ENCODE measurements at regions of chr17 and their contacts with region 1.

Region 1: DNA sequence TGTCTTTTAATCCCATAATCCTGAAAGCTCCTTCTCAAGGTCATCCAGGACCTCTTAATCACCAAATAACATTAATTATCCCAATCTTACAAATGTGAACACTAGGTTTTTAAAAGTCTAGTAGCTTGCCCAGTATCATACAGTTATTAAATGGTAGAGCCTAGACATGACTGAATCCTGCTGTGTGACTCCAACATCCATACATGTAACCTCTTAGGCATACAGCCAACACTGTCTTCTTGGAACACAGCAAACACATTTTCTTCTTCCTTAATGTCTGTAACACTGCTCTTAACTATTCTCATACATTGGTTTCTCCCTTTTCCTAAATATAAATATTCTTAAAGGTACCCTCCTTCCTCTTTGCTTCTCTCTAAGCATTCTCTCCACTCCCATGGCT is 13.7 kb downstream of the BRIP1 start:
- DNase-seq: peak; percentile 58
- ATAC-seq: no peak
- H3K4me3 ChIP-seq: no peak overlapping the region
- H3K27ac ChIP-seq: no peak overlapping the region
- H3K4me1 ChIP-seq: no peaks in the 10 kb centered on the region
- H3K27me3 ChIP-seq: no peaks in the 10 kb centered on the region
- CTCF ChIP-seq: no peak
- POLR2A ChIP-seq: no peak
- RAD21 ChIP-seq: no peak

Region 2: GRCh38 chr17:61426013-61426730 is 423.5 kb before region 1 on chr17:
- CTCF ChIA-PET with region 1: no interaction called
- POLR2A ChIA-PET with region 1: no interaction called
- dilution Hi-C with region 1: no loop called
- in situ Hi-C with region 1: loop called (anchors 10 kb)
- intact Hi-C with region 1: no loop called
- DNase-seq: no peak
- ATAC-seq: no peak
- H3K4me3 ChIP-seq: no peak overlapping the region
- H3K27ac ChIP-seq: no peak overlapping the region
- H3K4me1 ChIP-seq: peaks cover 1% of the 10 kb centered on the region; the same call in 1 of the 2 replicates
- H3K27me3 ChIP-seq: peaks cover 8% of the 10 kb centered on the region
- CTCF ChIP-seq: no peak; the same call in 1 of the 2 replicates
- POLR2A ChIP-seq: no peak
- RAD21 ChIP-seq: peak; percentile 29

Measured in IMR-90 (cell line).